Activated CD8-positive, alpha-beta T cell treated with anti-CD3 and anti-CD28 coated beads for 36 hours (primary cell): ENCODE measurements at regions of chr5 and their contacts with region 1.

Region 1: GRCh38 chr5:59673438-59674058 is 220.0 kb downstream of the PDE4D start:
- DNase-seq: no peak
- ATAC-seq: no peak
- H3K4me3 Mint-ChIP-seq: no peak overlapping the region
- H3K27ac Mint-ChIP-seq: no peak overlapping the region
- H3K4me1 Mint-ChIP-seq: no peaks in the 10 kb centered on the region
- H3K27me3 Mint-ChIP-seq: no peaks in the 10 kb centered on the region
- CTCF ChIP-seq: peak; percentile 83

Region 2: DNA sequence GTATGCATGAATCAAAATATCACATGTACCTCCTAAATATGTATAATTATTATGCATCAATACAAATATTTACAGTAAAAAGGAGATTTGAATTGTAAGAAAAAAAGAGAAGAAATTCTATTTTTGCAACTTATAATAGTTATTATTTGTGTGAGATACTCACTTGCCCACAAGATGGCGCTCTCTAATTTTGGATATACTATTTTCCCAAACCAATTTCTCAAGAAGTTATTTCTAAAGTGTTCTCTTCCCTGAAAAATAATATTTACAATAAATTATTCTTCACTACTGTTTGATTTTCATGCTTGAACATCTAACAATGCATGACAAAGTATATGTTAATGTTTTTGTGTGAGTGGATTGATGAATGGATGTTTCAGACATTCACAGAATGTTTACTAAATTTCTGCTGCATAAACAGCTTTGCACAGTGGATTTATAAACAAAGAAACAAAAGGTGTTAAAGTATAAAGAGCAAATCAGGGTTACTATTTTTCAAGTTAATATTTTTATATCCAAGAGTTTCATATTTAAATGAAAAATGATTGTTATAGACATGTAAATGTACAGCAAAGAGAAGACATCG is 283.4 kb before region 1 on chr5:
- CTCF ChIA-PET with region 1: interaction called, 8 read pairs
- POLR2A ChIA-PET with region 1: no interaction called
- intact Hi-C with region 1: loop called (anchors 5 kb)
- DNase-seq: peak; percentile 19
- ATAC-seq: no peak
- H3K4me3 Mint-ChIP-seq: no peak overlapping the region
- H3K27ac Mint-ChIP-seq: no peak overlapping the region
- H3K4me1 Mint-ChIP-seq: no peaks in the 10 kb centered on the region
- H3K27me3 Mint-ChIP-seq: peaks cover 4% of the 10 kb centered on the region
- CTCF ChIP-seq: peak; percentile 93

Region 3: DNA sequence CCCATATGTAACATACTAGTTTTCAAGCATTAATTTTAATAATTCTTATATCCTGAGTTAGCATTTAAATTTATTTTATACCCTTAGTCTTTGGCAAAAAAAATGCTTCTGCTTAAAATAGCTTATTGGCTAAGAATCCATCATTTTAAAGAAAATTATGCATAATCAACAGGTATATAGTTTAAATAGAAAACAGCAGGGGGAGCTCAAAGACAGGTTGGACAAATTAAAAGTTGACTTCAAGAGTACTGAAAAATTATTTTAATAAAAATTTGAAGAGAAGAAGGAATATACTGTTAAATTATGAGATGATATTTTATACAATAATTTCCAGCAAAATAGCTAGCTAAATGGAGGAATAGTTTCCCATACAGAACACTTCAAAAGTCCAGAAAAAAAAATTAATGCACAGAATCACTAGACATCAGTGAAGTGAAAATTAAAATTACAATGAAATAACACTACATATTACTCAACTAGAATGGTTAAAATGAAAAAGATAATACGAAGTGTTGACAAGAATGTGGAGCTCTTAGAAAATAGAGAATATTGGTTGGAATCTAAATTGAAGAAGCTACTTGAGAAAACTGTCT is 167.2 kb before region 1 on chr5:
- CTCF ChIA-PET with region 1: interaction called, 29 read pairs
- POLR2A ChIA-PET with region 1: no interaction called
- intact Hi-C with region 1: loop called (anchors 5 kb)
- DNase-seq: no peak
- ATAC-seq: no peak
- H3K4me3 Mint-ChIP-seq: no peak overlapping the region
- H3K27ac Mint-ChIP-seq: no peak overlapping the region
- H3K4me1 Mint-ChIP-seq: peaks cover 1% of the 10 kb centered on the region
- H3K27me3 Mint-ChIP-seq: no peaks in the 10 kb centered on the region
- CTCF ChIP-seq: peak; percentile 55

Region 4: DNA sequence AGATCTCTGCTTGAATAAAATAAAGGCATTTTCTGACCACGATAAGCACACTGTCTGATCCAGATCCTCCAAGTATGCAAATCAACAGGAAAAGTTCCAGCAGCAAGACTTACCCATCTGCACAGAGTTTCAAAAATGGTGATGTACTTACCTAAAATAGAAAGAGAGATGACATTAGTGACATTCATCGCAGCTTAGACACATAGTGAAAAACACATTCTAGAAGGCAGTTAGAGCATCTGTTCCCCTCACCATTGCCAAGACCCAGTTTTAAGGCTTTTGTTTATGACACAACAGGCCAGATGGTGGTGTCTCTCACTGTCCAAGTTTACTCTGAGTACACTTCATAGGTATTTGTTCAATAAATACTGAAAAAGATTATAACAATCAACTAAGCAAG is 12.2 kb after region 1 on chr5:
- CTCF ChIA-PET with region 1: interaction called, 11 read pairs
- POLR2A ChIA-PET with region 1: no interaction called
- intact Hi-C with region 1: no loop called
- DNase-seq: no peak
- ATAC-seq: no peak
- H3K4me3 Mint-ChIP-seq: no peak overlapping the region
- H3K27ac Mint-ChIP-seq: no peak overlapping the region
- H3K4me1 Mint-ChIP-seq: no peaks in the 10 kb centered on the region
- H3K27me3 Mint-ChIP-seq: peaks cover 8% of the 10 kb centered on the region
- CTCF ChIP-seq: no peak

Region 5: GRCh38 chr5:59863777-59864176 is 190.2 kb after region 1 on chr5:
- CTCF ChIA-PET with region 1: no interaction called
- POLR2A ChIA-PET with region 1: no interaction called
- intact Hi-C with region 1: no loop called
- DNase-seq: no peak
- ATAC-seq: no peak
- H3K4me3 Mint-ChIP-seq: no peak overlapping the region
- H3K27ac Mint-ChIP-seq: no peak overlapping the region
- H3K4me1 Mint-ChIP-seq: no peaks in the 10 kb centered on the region
- H3K27me3 Mint-ChIP-seq: peaks cover 3% of the 10 kb centered on the region
- CTCF ChIP-seq: no peak

Region 6: GRCh38 chr5:60148356-60148755 is 474.8 kb after region 1 on chr5:
- CTCF ChIA-PET with region 1: no interaction called
- POLR2A ChIA-PET with region 1: no interaction called
- intact Hi-C with region 1: no loop called
- DNase-seq: no peak
- ATAC-seq: no peak
- H3K4me3 Mint-ChIP-seq: no peak overlapping the region
- H3K27ac Mint-ChIP-seq: no peak overlapping the region
- H3K4me1 Mint-ChIP-seq: no peaks in the 10 kb centered on the region
- H3K27me3 Mint-ChIP-seq: no peaks in the 10 kb centered on the region
- CTCF ChIP-seq: no peak